ENCODE measurements at regions of chr17 and their contacts with region 1.

Region 1: GRCh38 chr17:7956228-7956965 is 24.4 kb downstream of the CNTROB start:
- DNase-seq: no peak
- ATAC-seq: no peak
- H3K4me3 ChIP-seq: no peak overlapping the region
- H3K27ac ChIP-seq: no peak overlapping the region
- H3K4me1 ChIP-seq: peaks cover 4% of the 10 kb centered on the region
- H3K27me3 ChIP-seq: no peaks in the 10 kb centered on the region
- CTCF ChIP-seq: no peak

Region 2: GRCh38 chr17:7943291-7943690 is 13.1 kb before region 1 on chr17:
- CTCF ChIA-PET with region 1: interaction called, 14 read pairs
- POLR2A ChIA-PET with region 1: no interaction called
- intact Hi-C with region 1: no loop called
- DNase-seq: no peak
- ATAC-seq: no peak
- H3K4me3 ChIP-seq: no peak overlapping the region
- H3K27ac ChIP-seq: no peak overlapping the region
- H3K4me1 ChIP-seq: no peaks in the 10 kb centered on the region
- H3K27me3 ChIP-seq: no peaks in the 10 kb centered on the region
- CTCF ChIP-seq: no peak

Region 3: GRCh38 chr17:7997186-7997585 is 40.8 kb after region 1 on chr17:
- CTCF ChIA-PET with region 1: no interaction called
- POLR2A ChIA-PET with region 1: no interaction called
- intact Hi-C with region 1: no loop called
- DNase-seq: peak; percentile 66
- ATAC-seq: peak; percentile 82
- H3K4me3 ChIP-seq: no peak overlapping the region; the same call in 1 of the 2 replicates
- H3K27ac ChIP-seq: no peak overlapping the region
- H3K4me1 ChIP-seq: peaks cover 7% of the 10 kb centered on the region; the same call in 1 of the 2 replicates
- H3K27me3 ChIP-seq: no peaks in the 10 kb centered on the region
- CTCF ChIP-seq: peak; percentile 70

Region 4: GRCh38 chr17:8016632-8017478 is 60.5 kb after region 1 on chr17:
- CTCF ChIA-PET with region 1: no interaction called
- POLR2A ChIA-PET with region 1: no interaction called
- intact Hi-C with region 1: no loop called
- DNase-seq: peak; percentile 65
- ATAC-seq: peak; percentile 63
- H3K4me3 ChIP-seq: peak overlapping the region; percentile 63
- H3K27ac ChIP-seq: peak overlapping the region; percentile 37
- H3K4me1 ChIP-seq: peaks cover 28% of the 10 kb centered on the region
- H3K27me3 ChIP-seq: no peaks in the 10 kb centered on the region
- CTCF ChIP-seq: peak; percentile 82